Gastrocnemius medialis (tissue), 4 donors: ENCODE measurements at regions of chr18 and their contacts with region 1.

Region 1: GRCh38 chr18:23629444-23629946 is 33.2 kb downstream of the ANKRD29 start:
- DNase-seq: no peak
- ATAC-seq: no peak
- H3K4me3 ChIP-seq: no peak overlapping the region
- H3K27ac ChIP-seq: no peak overlapping the region
- H3K4me1 ChIP-seq: peaks cover 7 to 23% of the 10 kb centered on the region in 2 donors
- H3K27me3 ChIP-seq: no peaks in the 10 kb centered on the region
- CTCF ChIP-seq: no peak
- POLR2A ChIP-seq: no peak

Region 2: DNA sequence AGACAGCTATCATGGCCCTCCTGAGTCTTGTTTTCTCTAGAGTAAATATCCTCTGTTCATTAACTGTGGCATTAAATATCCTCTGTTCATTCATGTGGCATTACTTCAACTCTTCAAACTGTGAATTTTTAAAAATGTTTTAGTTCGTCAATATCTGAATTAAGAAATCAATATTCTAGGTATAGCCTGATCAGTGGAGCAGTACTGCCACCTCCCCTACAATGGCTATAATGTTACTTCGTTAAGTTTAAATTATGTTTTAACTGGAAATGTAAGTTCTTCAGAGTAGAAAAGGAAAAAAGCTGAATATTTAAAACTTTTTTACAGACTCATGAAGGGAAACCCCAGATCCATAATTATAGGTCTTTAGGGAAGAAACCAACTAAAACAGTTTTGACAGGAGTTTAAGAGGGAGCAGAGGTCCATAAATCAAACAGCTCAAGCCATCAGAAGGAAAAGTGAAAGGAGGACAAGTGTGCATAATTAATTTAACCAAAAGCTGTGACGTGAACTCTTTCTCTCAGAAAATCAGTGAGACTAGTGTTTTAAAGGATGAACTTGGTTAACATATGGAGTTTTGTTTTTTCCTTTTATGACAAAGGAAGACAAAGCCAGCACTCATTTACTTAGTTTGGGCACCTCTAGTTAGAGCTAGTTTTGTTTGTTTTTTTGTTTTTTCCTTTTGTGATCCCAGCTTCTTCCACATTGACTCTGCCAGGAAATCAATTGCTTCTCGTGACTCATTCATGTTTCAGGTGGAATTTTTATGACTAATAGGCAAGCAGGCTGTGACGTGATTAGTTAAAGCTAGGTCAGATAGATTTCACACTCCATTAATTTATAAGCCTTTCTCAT is 651.4 kb before region 1 on chr18:
- in situ Hi-C with region 1: no loop called
- intact Hi-C with region 1: no loop called
- DNase-seq: no peak
- ATAC-seq: no peak
- H3K4me3 ChIP-seq: no peak overlapping the region
- H3K27ac ChIP-seq: no peak overlapping the region
- H3K4me1 ChIP-seq: no peaks in the 10 kb centered on the region
- H3K27me3 ChIP-seq: no peaks in the 10 kb centered on the region
- CTCF ChIP-seq: no peak
- POLR2A ChIP-seq: no peak

Region 3: GRCh38 chr18:23650968-23651927 is 21.8 kb after region 1 on chr18:
- in situ Hi-C with region 1: no loop called
- intact Hi-C with region 1: loop called (anchors 1 kb)
- DNase-seq: no peak
- ATAC-seq: peak in 1 of 2 donors; percentile 47
- H3K4me3 ChIP-seq: no peak overlapping the region
- H3K27ac ChIP-seq: peak overlapping the region in 1 of 4 donors; percentile 48
- H3K4me1 ChIP-seq: peaks cover 5 to 10% of the 10 kb centered on the region in 2 donors
- H3K27me3 ChIP-seq: no peaks in the 10 kb centered on the region
- CTCF ChIP-seq: no peak
- POLR2A ChIP-seq: no peak

Region 4: DNA sequence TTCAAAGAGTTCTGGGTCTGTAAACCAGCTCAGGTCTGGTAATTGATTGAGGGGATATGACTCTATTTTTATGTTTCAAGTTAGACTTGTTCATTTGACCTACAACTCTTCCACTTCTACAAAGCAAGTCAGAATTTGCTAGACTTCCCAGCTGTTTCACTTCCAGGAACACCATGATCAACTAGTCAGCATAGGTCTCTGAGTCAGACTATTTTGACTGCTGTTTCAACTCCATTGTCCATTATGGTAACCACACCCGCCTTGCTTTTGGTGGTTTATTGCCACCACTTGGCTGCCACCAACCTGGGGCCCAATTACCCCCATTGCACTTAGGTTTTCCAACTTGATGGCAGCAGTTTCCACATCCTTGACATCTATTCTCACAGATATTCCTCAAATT is 176.4 kb after region 1 on chr18:
- in situ Hi-C with region 1: loop called in 3 of 4 experiments (anchors 5 to 25 kb)
- intact Hi-C with region 1: no loop called
- DNase-seq: no peak
- ATAC-seq: no peak
- H3K4me3 ChIP-seq: no peak overlapping the region
- H3K27ac ChIP-seq: no peak overlapping the region
- H3K4me1 ChIP-seq: no peaks in the 10 kb centered on the region
- H3K27me3 ChIP-seq: no peaks in the 10 kb centered on the region
- CTCF ChIP-seq: no peak
- POLR2A ChIP-seq: no peak

Region 5: DNA sequence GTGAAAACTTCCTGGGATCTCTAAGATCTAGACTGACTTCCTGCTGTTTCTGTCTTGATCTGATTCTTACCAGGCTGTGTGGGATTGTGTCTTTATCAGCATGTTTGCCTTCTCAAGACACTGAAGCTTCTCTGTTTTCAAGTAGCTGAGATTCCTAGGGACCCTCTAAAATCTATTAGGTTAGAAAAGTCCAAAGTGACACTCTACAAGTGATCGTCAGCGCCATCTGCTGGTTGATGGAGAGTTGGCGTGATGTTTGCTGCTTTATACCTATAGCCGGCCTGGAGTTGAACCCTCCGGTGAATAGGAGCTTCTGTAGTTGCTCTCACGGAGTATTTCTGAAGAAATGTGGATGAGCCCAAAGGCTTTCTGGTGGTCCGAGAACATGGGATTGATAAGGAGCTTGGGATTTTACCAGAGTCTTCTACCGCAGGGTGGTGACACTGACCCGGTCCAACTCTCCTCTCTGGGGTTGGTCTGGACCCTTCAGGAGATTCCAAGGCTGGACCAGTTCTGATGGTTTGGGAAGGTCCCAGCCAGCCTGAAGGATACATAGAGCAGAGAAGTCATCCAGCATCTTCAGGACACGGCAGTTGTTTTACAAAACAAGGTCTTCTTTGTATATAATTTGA is 289.0 kb after region 1 on chr18:
- in situ Hi-C with region 1: loop called in 2 of 4 experiments (anchors 10 to 25 kb)
- intact Hi-C with region 1: loop called (anchors 5 kb)
- DNase-seq: peak; percentile 24 to 43
- ATAC-seq: peak; percentile 77 to 87
- H3K4me3 ChIP-seq: no peak overlapping the region
- H3K27ac ChIP-seq: no peak overlapping the region
- H3K4me1 ChIP-seq: no peaks in the 10 kb centered on the region
- H3K27me3 ChIP-seq: no peaks in the 10 kb centered on the region
- CTCF ChIP-seq: peak; percentile 53 to 84 (median 69)
- POLR2A ChIP-seq: no peak

Region 6: DNA sequence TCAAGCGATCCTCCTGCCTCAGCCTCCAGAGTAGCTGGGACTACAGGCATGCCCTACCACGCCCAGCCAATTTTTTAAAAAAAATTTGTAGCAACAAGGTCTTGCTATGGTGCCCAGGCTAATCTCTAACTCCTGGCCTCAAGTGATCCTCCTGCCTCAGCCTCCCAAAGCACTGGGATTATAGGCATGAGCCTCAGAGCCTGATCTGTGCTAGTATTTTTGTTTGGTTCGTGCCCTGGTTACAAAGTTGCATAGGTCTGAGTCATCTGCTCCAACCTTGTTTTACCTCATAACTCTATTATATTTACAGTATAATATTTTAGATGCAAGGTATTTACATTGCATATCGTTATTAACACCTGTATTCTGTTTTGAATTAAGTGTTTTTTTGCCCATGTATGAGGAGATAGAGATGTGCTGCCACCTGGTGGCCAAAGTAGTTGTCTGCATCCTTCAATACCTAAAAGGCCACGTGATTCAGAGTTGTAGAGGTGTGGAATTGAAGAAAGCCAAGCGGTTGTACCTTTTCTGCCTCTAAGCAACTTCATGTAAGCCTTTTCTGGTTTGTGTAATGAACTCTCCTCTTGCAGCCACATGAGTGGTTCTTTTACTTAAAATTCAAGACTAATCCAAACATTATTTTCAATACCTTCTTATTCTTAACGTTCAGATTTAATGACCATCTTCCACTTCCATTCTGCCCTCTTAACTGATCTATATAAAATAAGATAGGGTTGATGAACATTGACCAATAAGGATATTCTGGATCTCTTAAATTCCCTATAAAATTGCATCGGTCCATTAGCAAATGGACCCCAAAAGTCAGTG is 489.5 kb after region 1 on chr18:
- in situ Hi-C with region 1: loop called in 2 of 4 experiments (anchors 10 to 25 kb)
- intact Hi-C with region 1: loop called (anchors 10 kb)
- DNase-seq: peak; percentile 17 to 48
- ATAC-seq: peak; percentile 70 to 84
- H3K4me3 ChIP-seq: no peak overlapping the region
- H3K27ac ChIP-seq: no peak overlapping the region
- H3K4me1 ChIP-seq: no peaks in the 10 kb centered on the region
- H3K27me3 ChIP-seq: no peaks in the 10 kb centered on the region
- CTCF ChIP-seq: peak; percentile 75 to 89 (median 86)
- POLR2A ChIP-seq: no peak